ENCODE measurements at regions of chr4 and their contacts with region 1.

Region 1: GRCh38 chr4:119087121-119087520 is 48.5 kb upstream of the MYOZ2 start:
- DNase-seq: peak; percentile 2
- ATAC-seq: 0 out of 2 replicates have a peak, but pooled peaks have one; percentile 24
- H3K4me3 ChIP-seq: no peak overlapping the region
- H3K27ac ChIP-seq: no peak overlapping the region
- H3K4me1 ChIP-seq: no peaks in the 10 kb centered on the region
- H3K27me3 ChIP-seq: no peaks in the 10 kb centered on the region
- CTCF ChIP-seq: peak; percentile 44; the same call in 1 of the 2 replicates

Region 2: GRCh38 chr4:119025916-119026661 is 61.0 kb before region 1 on chr4:
- CTCF ChIA-PET with region 1: no interaction called
- POLR2A ChIA-PET with region 1: no interaction called
- intact Hi-C with region 1: no loop called
- DNase-seq: peak; percentile 60
- ATAC-seq: peak; percentile 30
- H3K4me3 ChIP-seq: peak overlapping the region; percentile 59; the same call in 1 of the 2 replicates
- H3K27ac ChIP-seq: peak overlapping the region; percentile 85
- H3K4me1 ChIP-seq: peaks cover 15% of the 10 kb centered on the region
- H3K27me3 ChIP-seq: no peaks in the 10 kb centered on the region
- CTCF ChIP-seq: no peak

Region 3: GRCh38 chr4:119286377-119287002 is 199.4 kb after region 1 on chr4:
- CTCF ChIA-PET with region 1: no interaction called
- POLR2A ChIA-PET with region 1: no interaction called
- intact Hi-C with region 1: loop called (anchors 1 kb)
- DNase-seq: peak; percentile 62
- ATAC-seq: no peak
- H3K4me3 ChIP-seq: no peak overlapping the region
- H3K27ac ChIP-seq: no peak overlapping the region
- H3K4me1 ChIP-seq: 0 out of 2 replicates have a peak, but pooled peaks cover 7% of the 10 kb centered on the region
- H3K27me3 ChIP-seq: no peaks in the 10 kb centered on the region
- CTCF ChIP-seq: peak; percentile 65